CD8-positive, alpha-beta T cell (primary cell): ENCODE measurements at regions of chr2 and their contacts with region 1.

Region 1: DNA sequence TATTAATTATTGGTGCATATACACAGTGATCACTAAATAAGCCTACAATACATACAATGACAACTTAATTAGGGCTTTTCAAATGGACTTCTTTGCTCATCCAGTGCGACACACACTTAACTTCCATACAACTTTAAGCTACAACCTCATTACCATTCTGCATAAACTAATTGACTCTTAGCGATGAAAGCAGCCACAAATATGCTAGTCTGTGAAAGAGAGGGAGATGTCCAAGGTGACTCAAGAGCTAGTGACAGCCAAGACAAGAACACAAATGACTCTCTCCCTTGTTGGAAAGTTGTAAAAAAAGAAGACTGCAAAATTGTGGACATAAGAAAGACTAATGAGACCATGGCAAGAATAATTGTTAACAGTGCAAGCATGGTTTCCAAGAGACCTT is 264.8 kb downstream of the ARHGAP15 start:
- DNase-seq: no peak
- ATAC-seq: no peak
- H3K4me3 ChIP-seq: no peak overlapping the region
- H3K4me3 Mint-ChIP-seq: no peak overlapping the region
- H3K27ac ChIP-seq: no peak overlapping the region
- H3K27ac Mint-ChIP-seq: no peak overlapping the region
- H3K4me1 ChIP-seq: no peaks in the 10 kb centered on the region
- H3K4me1 Mint-ChIP-seq: peaks cover 63% of the 10 kb centered on the region
- H3K27me3 ChIP-seq: no peaks in the 10 kb centered on the region
- H3K27me3 Mint-ChIP-seq: no peaks in the 10 kb centered on the region
- CTCF ChIP-seq: no peak

Region 2: DNA sequence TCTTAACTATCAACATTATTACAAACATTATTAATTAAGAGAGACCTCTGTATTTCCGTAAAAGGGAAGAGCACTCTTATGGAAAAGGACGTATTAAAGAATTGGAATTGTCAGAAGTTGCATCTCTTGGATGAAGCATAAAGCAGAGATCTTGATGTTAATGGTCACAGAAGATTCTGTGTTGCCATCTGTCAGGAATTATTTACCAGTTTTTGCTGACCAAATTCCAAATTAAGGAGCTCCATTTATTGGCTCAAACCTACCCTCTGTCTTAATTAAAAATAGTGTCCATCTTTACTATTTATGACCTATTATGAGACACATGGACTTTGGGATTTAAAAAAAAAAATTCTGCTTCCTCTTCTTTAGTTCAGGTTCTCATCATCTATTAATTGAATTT is 32.7 kb before region 1 on chr2:
- CTCF ChIA-PET with region 1: no interaction called
- POLR2A ChIA-PET with region 1: no interaction called
- intact Hi-C with region 1: no loop called
- DNase-seq: no peak
- ATAC-seq: no peak
- H3K4me3 ChIP-seq: no peak overlapping the region
- H3K4me3 Mint-ChIP-seq: no peak overlapping the region
- H3K27ac ChIP-seq: no peak overlapping the region
- H3K27ac Mint-ChIP-seq: no peak overlapping the region
- H3K4me1 ChIP-seq: no peaks in the 10 kb centered on the region
- H3K4me1 Mint-ChIP-seq: peaks cover 49% of the 10 kb centered on the region
- H3K27me3 ChIP-seq: no peaks in the 10 kb centered on the region
- H3K27me3 Mint-ChIP-seq: no peaks in the 10 kb centered on the region
- CTCF ChIP-seq: no peak

Region 3: GRCh38 chr2:143379955-143380354 is 14.1 kb before region 1 on chr2:
- CTCF ChIA-PET with region 1: interaction called, 3 read pairs
- POLR2A ChIA-PET with region 1: no interaction called
- intact Hi-C with region 1: loop called in 1 of 2 experiments (anchors 2 kb)
- DNase-seq: no peak
- ATAC-seq: no peak
- H3K4me3 ChIP-seq: no peak overlapping the region
- H3K4me3 Mint-ChIP-seq: no peak overlapping the region
- H3K27ac ChIP-seq: no peak overlapping the region
- H3K27ac Mint-ChIP-seq: peak overlapping the region; percentile 14
- H3K4me1 ChIP-seq: no peaks in the 10 kb centered on the region
- H3K4me1 Mint-ChIP-seq: peaks cover 30% of the 10 kb centered on the region
- H3K27me3 ChIP-seq: no peaks in the 10 kb centered on the region
- H3K27me3 Mint-ChIP-seq: no peaks in the 10 kb centered on the region
- CTCF ChIP-seq: no peak

Region 4: GRCh38 chr2:143422681-143423080 is 28.6 kb after region 1 on chr2:
- CTCF ChIA-PET with region 1: no interaction called
- POLR2A ChIA-PET with region 1: no interaction called
- intact Hi-C with region 1: no loop called
- DNase-seq: peak in 1 of 9 experiments; percentile 33
- ATAC-seq: peak; percentile 77
- H3K4me3 ChIP-seq: no peak overlapping the region
- H3K4me3 Mint-ChIP-seq: no peak overlapping the region
- H3K27ac ChIP-seq: no peak overlapping the region
- H3K27ac Mint-ChIP-seq: peak overlapping the region; percentile 4
- H3K4me1 ChIP-seq: peaks cover 14% of the 10 kb centered on the region
- H3K4me1 Mint-ChIP-seq: peaks cover 73% of the 10 kb centered on the region
- H3K27me3 ChIP-seq: no peaks in the 10 kb centered on the region
- H3K27me3 Mint-ChIP-seq: no peaks in the 10 kb centered on the region
- CTCF ChIP-seq: no peak